CD4-positive, alpha-beta memory T cell (primary cell): ENCODE measurements at regions of chr17 and their contacts with region 1.

Region 1: GRCh38 chr17:979538-980405 is at the start of gene NXN:
- DNase-seq: peak; percentile 79 to 88 (median 83)
- H3K4me3 ChIP-seq: peak within 1 kb of the TSS in 1 of 2 donors; percentile 45
- H3K4me3 Mint-ChIP-seq: peak within 1 kb of the TSS; percentile 73 to 89 (median 85)
- H3K27ac ChIP-seq: peak within 1 kb of the TSS; percentile 37
- H3K27ac Mint-ChIP-seq: peak within 1 kb of the TSS in 4 of 7 donors; percentile 30 to 93 (median 65)
- H3K4me1 ChIP-seq: peaks cover 20% of the 10 kb centered on the region
- H3K4me1 Mint-ChIP-seq: peaks cover 7 to 21% (median 15%) of the 10 kb centered on the region in 4 donors
- H3K27me3 ChIP-seq: peaks cover 14% of the 10 kb centered on the region
- H3K27me3 Mint-ChIP-seq: peaks cover 19 to 25% of the 10 kb centered on the region in 2 donors
- total RNA-seq, gene NXN: 0.55 to 1.5 TPM

Region 2: GRCh38 chr17:716238-716637 is 263.5 kb before region 1 on chr17:
- CTCF ChIA-PET with region 1: interaction called, 4 read pairs
- POLR2A ChIA-PET with region 1: interaction called, 3 read pairs
- intact Hi-C with region 1: loop called (anchors 2 kb)
- DNase-seq: no peak
- H3K4me3 ChIP-seq: no peak overlapping the region
- H3K4me3 Mint-ChIP-seq: peak overlapping the region in 5 of 8 donors; percentile 17 to 66 (median 63)
- H3K27ac ChIP-seq: no peak overlapping the region
- H3K27ac Mint-ChIP-seq: no peak overlapping the region
- H3K4me1 ChIP-seq: peaks cover 19% of the 10 kb centered on the region
- H3K4me1 Mint-ChIP-seq: peaks cover 13 to 33% (median 23%) of the 10 kb centered on the region in 4 donors
- H3K27me3 ChIP-seq: no peaks in the 10 kb centered on the region
- H3K27me3 Mint-ChIP-seq: peaks cover 0 to 2% of the 10 kb centered on the region in 2 donors

Region 3: DNA sequence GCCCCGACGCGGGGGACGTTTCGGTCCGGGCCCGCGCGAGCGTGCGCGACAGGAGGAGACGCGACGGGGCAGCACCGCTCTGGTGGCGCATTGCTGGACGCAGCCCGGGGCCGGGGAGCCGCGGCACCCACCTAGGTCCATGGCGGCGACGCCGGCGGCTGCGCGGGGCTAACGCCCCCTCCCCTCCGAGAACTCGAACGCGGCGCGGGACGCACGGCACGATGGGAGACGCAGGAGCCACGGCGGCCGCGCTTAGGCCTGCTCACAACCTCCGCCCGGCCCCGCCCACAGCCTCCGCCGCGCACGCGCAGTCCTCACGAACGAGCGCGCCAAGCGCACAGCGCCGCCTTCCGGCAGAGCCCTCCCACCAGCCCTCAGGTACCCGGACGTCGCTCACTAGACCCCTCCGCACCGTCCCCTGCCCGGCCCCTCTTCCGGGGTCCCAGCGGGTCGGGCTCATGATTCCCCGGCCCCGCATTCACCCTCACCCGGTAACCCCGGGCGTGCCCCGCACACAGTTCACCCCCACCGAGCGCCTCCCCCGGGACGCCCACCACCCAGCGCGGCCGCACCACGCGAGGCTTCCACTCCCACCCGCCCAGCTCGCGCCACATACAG is 227.7 kb before region 1 on chr17 and contains the start of gene GEMIN4:
- CTCF ChIA-PET with region 1: interaction called, 7 read pairs
- POLR2A ChIA-PET with region 1: interaction called, 3 read pairs
- intact Hi-C with region 1: loop called (anchors 1 kb)
- DNase-seq: peak; percentile 93 to 99 (median 96)
- H3K4me3 ChIP-seq: peak within 1 kb of the TSS; percentile 73 to 81
- H3K4me3 Mint-ChIP-seq: peak within 1 kb of the TSS; percentile 92 to 97 (median 94)
- H3K27ac ChIP-seq: peak within 1 kb of the TSS; percentile 69
- H3K27ac Mint-ChIP-seq: peak within 1 kb of the TSS; percentile 86 to 97 (median 95)
- H3K4me1 ChIP-seq: peaks cover 27% of the 10 kb centered on the region
- H3K4me1 Mint-ChIP-seq: peaks cover 24 to 46% (median 33%) of the 10 kb centered on the region in 4 donors
- H3K27me3 ChIP-seq: no peaks in the 10 kb centered on the region
- H3K27me3 Mint-ChIP-seq: no peaks in the 10 kb centered on the region
- total RNA-seq, gene GEMIN4: 24.4 to 24.7 TPM

Region 4: GRCh38 chr17:781805-782731 is 197.7 kb before region 1 on chr17 and contains the starts of genes GLOD4 and MRM3:
- CTCF ChIA-PET with region 1: interaction called, 16 read pairs
- POLR2A ChIA-PET with region 1: interaction called, 24 read pairs
- intact Hi-C with region 1: no loop called
- DNase-seq: peak; percentile 93 to 97 (median 95)
- H3K4me3 ChIP-seq: peak within 1 kb of the TSS; percentile 99 to 100
- H3K4me3 Mint-ChIP-seq: peak within 1 kb of the TSS; percentile 94 to 98 (median 96)
- H3K27ac ChIP-seq: peak within 1 kb of the TSS; percentile 90
- H3K27ac Mint-ChIP-seq: peak within 1 kb of the TSS; percentile 96 to 99 (median 99)
- H3K4me1 ChIP-seq: peaks cover 38% of the 10 kb centered on the region
- H3K4me1 Mint-ChIP-seq: peaks cover 22 to 43% (median 34%) of the 10 kb centered on the region in 4 donors
- H3K27me3 ChIP-seq: no peaks in the 10 kb centered on the region
- H3K27me3 Mint-ChIP-seq: no peaks in the 10 kb centered on the region
- total RNA-seq, gene GLOD4: 94.9 to 97.2 TPM
- total RNA-seq, gene MRM3: 18.6 to 20.9 TPM

Region 5: DNA sequence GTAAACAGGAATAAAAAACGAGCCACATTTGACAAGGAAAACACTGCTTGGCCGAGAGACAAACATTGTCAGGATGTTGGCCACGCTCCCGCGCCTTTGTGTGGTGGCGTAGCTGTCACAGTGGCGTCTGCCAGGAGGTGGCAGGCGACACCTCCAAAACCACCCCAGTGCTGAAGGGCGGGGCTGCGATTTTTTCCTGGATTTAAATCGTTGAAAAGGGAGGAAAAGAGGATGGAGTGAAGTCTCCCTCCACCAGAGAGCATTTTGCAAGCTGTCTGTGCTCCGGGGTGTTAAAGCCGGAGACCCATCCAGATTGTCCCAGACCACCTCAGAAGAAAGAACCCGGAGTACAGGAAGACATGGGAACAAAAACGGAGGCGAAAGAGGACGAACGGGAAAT is 184.9 kb before region 1 on chr17:
- CTCF ChIA-PET with region 1: interaction called, 22 read pairs
- POLR2A ChIA-PET with region 1: interaction called, 6 read pairs
- intact Hi-C with region 1: loop called (anchors 1 kb)
- DNase-seq: peak in 4 of 5 donors; percentile 29 to 35 (median 30)
- H3K4me3 ChIP-seq: no peak overlapping the region
- H3K4me3 Mint-ChIP-seq: peak overlapping the region in 1 of 8 donors; percentile 26
- H3K27ac ChIP-seq: no peak overlapping the region
- H3K27ac Mint-ChIP-seq: peak overlapping the region in 2 of 7 donors; percentile 57 to 64
- H3K4me1 ChIP-seq: peaks cover 5% of the 10 kb centered on the region
- H3K4me1 Mint-ChIP-seq: peaks cover 3 to 9% (median 6%) of the 10 kb centered on the region in 4 donors
- H3K27me3 ChIP-seq: no peaks in the 10 kb centered on the region
- H3K27me3 Mint-ChIP-seq: no peaks in the 10 kb centered on the region

Region 6: DNA sequence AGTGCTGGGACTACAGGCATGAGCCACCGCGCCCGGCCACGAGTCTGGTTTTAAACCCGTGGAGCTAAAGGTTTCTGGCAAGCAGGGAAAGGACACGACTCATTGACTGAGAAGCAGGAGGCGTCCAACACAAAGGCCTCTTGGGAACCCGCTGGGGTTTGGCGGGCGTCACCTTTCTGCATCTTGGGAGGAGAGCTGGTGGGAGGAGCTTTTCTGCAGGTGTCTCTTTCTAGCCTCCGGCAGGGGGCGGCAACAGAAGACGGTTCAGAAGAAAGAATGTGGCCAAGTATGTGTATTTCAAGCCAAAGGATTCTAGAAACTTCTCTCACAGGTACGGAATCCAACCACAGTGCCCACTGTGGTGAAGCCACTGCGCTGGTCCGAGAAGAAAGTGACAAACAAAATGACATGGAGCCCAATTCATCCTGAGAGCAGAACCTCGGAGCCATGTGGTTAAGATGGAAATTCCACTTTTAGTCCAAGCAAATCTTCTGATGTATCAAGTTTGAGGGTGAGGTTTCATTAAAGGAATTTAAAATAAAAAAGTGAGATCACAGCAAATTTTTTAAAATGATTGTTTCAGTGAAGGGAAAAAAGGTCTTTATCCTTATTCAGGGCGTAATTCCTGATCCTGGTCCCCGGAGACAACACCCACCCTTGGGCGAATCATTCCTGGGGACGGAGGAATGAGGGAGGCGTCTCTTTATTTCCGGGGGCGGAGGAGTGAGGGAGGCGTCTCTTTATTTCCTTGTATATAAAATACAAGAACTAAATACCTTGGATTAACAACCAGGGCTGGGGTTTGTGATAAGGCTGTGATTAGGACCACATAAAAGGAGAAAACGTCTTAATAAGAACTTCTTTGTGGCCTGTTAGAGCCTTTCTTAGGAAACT is 100.0 kb before region 1 on chr17:
- CTCF ChIA-PET with region 1: interaction called, 65 read pairs
- POLR2A ChIA-PET with region 1: interaction called, 14 read pairs
- intact Hi-C with region 1: loop called (anchors 1 kb)
- DNase-seq: peak; percentile 66 to 73 (median 70)
- H3K4me3 ChIP-seq: no peak overlapping the region
- H3K4me3 Mint-ChIP-seq: peak overlapping the region in 1 of 8 donors; percentile 7
- H3K27ac ChIP-seq: no peak overlapping the region
- H3K27ac Mint-ChIP-seq: no peak overlapping the region
- H3K4me1 ChIP-seq: peaks cover 3% of the 10 kb centered on the region
- H3K4me1 Mint-ChIP-seq: peaks cover 4 to 12% (median 8%) of the 10 kb centered on the region in 4 donors
- H3K27me3 ChIP-seq: no peaks in the 10 kb centered on the region
- H3K27me3 Mint-ChIP-seq: peaks cover 16 to 29% of the 10 kb centered on the region in 2 donors

Region 7: GRCh38 chr17:962670-963069 is 17.1 kb before region 1 on chr17:
- CTCF ChIA-PET with region 1: no interaction called
- POLR2A ChIA-PET with region 1: no interaction called
- intact Hi-C with region 1: no loop called
- DNase-seq: no peak
- H3K4me3 ChIP-seq: no peak overlapping the region
- H3K4me3 Mint-ChIP-seq: no peak overlapping the region
- H3K27ac ChIP-seq: no peak overlapping the region
- H3K27ac Mint-ChIP-seq: no peak overlapping the region
- H3K4me1 ChIP-seq: no peaks in the 10 kb centered on the region
- H3K4me1 Mint-ChIP-seq: no peaks in the 10 kb centered on the region
- H3K27me3 ChIP-seq: no peaks in the 10 kb centered on the region
- H3K27me3 Mint-ChIP-seq: peaks cover 11 to 22% of the 10 kb centered on the region in 2 donors

Region 8: DNA sequence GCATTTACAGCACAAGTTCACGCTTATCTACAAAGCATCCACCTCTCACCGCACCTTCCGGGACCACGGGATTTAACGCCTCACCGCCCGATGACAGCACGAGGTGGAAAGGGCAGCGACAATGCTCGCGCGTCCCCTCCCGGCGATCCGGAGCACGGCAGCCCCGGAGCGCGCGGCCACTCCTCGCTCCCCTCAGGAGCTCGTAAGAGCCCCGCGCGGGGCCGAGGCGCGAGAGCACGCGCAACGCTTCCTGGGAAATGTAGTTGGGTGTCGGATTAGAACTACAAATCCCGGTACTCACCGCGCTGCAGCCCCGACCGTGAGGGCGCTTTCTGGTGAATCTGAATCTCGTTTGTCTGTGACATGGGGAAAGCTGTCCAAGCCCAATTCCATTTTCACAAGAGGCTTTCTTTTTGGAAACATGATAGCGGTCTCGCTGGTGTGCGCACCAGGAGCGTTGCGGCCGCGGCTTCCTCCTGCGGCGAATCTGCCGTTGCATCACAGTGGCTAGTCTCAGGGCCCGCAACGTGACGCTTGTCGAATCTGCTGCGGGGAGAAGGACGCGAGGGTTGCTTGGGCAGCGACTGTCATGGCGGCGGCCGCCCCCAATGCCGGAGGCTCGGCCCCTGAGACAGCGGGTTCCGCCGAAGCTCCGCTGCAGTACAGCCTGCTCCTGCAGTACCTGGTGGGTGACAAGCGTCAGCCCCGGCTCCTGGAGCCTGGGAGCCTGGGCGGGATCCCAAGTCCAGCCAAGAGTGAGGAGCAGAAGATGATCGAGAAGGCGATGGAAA is 17.0 kb after region 1 on chr17 and contains the start of gene TIMM22:
- CTCF ChIA-PET with region 1: interaction called, 30 read pairs
- POLR2A ChIA-PET with region 1: interaction called, 41 read pairs
- intact Hi-C with region 1: loop called (anchors 1 kb)
- DNase-seq: peak; percentile 94 to 95 (median 95)
- H3K4me3 ChIP-seq: peak within 1 kb of the TSS; percentile 84 to 99
- H3K4me3 Mint-ChIP-seq: peak within 1 kb of the TSS; percentile 96 to 99 (median 98)
- H3K27ac ChIP-seq: peak within 1 kb of the TSS; percentile 83
- H3K27ac Mint-ChIP-seq: peak within 1 kb of the TSS; percentile 96 to 99 (median 99)
- H3K4me1 ChIP-seq: peaks cover 18% of the 10 kb centered on the region
- H3K4me1 Mint-ChIP-seq: peaks cover 13 to 34% (median 22%) of the 10 kb centered on the region in 4 donors
- H3K27me3 ChIP-seq: no peaks in the 10 kb centered on the region
- H3K27me3 Mint-ChIP-seq: no peaks in the 10 kb centered on the region
- total RNA-seq, gene TIMM22: 12.3 to 13.2 TPM